ENCODE measurements at regions of chr7 and their contacts with region 1.

Region 1: DNA sequence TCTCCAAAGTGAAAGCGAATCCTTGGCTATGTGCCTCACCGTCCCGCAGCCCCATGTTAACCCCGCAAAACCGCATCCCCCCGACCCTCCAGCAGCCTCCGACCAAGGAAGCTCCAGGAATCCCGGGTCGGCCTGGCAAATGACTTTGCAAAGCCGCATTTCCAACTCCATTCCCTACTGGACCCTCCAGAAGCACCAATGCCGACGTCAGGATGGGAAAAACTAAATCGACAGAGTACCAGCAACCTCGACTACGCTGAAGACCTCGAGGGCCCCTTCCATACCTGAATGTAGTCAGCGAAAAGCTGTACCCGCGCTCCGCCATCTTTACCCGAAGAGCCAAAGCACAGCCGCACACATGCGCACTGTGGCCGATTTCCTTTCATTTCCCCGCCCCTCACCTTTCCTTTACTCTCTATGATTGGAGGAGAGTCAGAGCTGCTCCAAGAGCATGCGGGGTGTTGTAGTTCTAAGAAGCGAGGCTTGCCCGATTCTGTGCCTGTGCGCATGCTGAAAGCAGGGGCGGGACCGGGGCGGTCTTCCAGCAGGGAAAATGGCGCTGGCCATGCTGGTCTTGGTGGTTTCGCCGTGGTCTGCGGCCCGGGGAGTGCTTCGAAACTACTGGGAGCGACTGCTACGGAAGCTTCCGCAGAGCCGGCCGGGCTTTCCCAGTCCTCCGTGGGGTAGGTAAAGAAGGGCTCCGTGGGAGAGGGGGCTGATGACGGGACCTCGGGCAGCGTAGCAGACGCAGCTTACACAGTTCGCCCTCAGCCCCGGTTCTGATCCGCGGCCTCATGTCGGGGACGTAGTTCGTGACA is at the starts of genes MRPL32 and PSMA2:
- DNase-seq: peak; percentile 99
- total RNA-seq, gene MRPL32: 99.9 and 117 TPM in 2 replicates
- total RNA-seq, gene PSMA2: 155 and 176 TPM in 2 replicates

Region 2: DNA sequence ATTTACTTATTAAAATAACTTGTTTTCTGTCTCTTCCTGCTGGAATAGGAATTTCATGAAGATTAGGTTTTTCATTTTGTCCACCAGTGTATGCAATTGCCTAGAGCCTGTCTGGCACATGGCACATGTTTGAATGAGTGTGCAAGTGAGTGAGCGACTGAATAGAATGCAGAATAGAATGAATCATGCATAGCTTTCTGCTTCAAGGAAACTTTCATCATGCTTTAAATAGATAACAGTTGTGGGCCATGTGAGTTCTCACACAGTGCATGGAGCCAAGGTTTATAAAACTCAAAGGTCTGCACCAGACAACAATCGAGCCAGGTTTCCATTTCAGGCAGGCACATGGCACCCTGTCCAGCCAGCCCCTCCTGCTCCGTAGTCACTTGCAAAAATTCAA is 106.2 kb after region 1 on chr7:
- in situ Hi-C with region 1: no loop called
- DNase-seq: no peak

Region 3: GRCh38 chr7:43454936-43455518 is 523.0 kb after region 1 on chr7:
- in situ Hi-C with region 1: loop called (anchors 25 kb)
- DNase-seq: peak; percentile 73

Region 4: GRCh38 chr7:43700059-43700501 is 768.0 kb after region 1 on chr7:
- in situ Hi-C with region 1: loop called (anchors 25 kb)
- DNase-seq: peak; percentile 78

Measured in SK-MEL-5 (cell line).